Right lobe of liver (tissue), 6 donors: ENCODE measurements at regions of chr2 and their contacts with region 1.

Region 1: DNA sequence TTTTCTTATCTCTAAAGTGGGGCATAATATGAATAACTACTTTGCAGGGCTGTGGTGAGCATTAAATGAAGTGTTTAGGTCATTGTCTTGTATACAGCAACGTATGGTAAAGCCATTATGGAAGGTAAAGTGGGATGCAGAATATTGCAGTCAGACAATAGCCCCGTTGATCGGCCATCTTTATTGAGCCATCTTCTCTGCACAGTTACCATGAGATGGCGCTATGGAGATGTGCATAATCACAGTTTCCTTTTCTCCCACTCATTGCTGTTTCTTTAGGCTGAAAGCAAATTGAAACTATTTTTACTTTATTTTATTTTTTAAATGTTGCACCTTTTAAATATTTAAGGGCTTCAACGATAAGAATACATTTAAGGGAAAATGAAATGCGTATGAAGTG is 108.9 kb downstream of the THSD7B start:
- DNase-seq: no peak
- ATAC-seq: peak; percentile 68 to 88 (median 77)
- H3K4me3 ChIP-seq: no peak overlapping the region
- H3K27ac ChIP-seq: no peak overlapping the region
- H3K4me1 ChIP-seq: no peaks in the 10 kb centered on the region
- H3K27me3 ChIP-seq: no peaks in the 10 kb centered on the region
- CTCF ChIP-seq: peak; percentile 49 to 70 (median 60)
- POLR2A ChIP-seq: no peak

Region 2: GRCh38 chr2:136783856-136784255 is 90.4 kb before region 1 on chr2:
- intact Hi-C with region 1: no loop called
- DNase-seq: no peak
- ATAC-seq: no peak
- H3K4me3 ChIP-seq: no peak overlapping the region
- H3K27ac ChIP-seq: no peak overlapping the region
- H3K4me1 ChIP-seq: no peaks in the 10 kb centered on the region
- H3K27me3 ChIP-seq: no peaks in the 10 kb centered on the region
- CTCF ChIP-seq: no peak
- POLR2A ChIP-seq: no peak

Region 3: DNA sequence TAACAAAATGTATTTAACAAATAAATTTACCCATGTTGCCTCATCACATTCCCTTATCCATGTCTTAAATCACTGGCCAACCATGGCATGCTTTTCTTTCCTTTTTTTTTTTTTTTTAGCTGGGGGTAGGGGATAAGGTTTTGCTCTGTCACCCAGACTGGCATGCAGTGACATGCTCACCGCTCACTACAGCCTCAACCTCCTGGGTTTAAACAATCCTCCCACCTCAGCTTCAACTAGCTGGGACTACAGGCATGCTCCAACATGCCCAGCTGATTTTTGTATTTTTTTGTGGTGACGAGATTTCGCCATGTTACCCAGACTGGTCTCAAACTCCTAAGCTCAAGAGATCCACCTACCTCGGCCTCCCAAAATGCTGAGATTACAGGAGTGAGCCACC is 157.5 kb after region 1 on chr2:
- intact Hi-C with region 1: loop called in 1 of 2 experiments (anchors 10 kb)
- DNase-seq: no peak
- ATAC-seq: no peak
- H3K4me3 ChIP-seq: no peak overlapping the region
- H3K27ac ChIP-seq: no peak overlapping the region
- H3K4me1 ChIP-seq: no peaks in the 10 kb centered on the region
- H3K27me3 ChIP-seq: no peaks in the 10 kb centered on the region
- CTCF ChIP-seq: no peak
- POLR2A ChIP-seq: no peak